ENCODE measurements at regions of chr12 and their contacts with region 1.

Region 1: DNA sequence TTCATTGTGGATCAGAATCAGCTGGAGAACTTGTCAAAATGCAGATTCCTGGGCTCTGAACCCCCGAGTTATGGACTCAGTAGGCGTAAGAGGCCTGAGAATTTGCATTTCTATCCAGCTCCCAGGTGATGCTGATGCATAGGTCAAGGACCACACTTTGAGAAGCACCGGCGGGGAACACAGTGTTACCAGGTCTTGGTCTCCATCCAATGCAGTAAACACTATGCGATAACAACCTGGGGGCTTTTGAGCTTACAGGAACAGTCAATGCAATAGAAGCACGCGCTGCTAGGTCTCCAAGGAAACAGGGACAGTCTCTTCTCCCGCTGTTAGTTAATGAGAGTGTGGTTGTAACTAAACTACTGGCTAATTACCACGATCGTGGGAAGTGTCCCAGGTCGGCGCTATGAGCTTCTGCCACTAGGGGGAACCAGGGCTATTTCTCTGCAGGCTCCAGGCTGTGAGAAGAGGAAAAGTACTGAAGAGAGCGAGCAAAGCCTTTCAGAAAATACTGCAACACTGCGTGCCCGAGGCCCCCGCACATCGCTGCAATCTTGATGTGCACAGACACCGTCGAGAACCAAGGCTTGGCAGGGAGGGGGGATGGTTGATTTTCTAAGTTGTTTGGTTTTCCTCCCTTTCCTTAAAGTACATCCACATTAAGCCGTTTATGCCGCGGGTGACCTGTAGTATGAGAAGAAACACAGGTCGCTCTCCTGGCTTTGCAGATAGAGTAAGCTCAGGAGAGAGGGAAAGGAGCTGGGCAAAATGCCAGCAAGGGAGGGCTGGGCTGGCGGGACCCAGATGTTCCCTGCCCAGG is 52.0 kb upstream of the KCNA1 start:
- DNase-seq: peak; percentile 5
- H3K4me3 ChIP-seq: peak overlapping the region; percentile 27
- CTCF ChIP-seq: peak; percentile 88

Region 2: GRCh38 chr12:4899364-4899763 is 41.7 kb after region 1 on chr12:
- CTCF ChIA-PET with region 1: interaction called, 28 read pairs
- POLR2A ChIA-PET with region 1: no interaction called
- DNase-seq: no peak
- H3K4me3 ChIP-seq: no peak overlapping the region
- CTCF ChIP-seq: peak; percentile 6

Region 3: DNA sequence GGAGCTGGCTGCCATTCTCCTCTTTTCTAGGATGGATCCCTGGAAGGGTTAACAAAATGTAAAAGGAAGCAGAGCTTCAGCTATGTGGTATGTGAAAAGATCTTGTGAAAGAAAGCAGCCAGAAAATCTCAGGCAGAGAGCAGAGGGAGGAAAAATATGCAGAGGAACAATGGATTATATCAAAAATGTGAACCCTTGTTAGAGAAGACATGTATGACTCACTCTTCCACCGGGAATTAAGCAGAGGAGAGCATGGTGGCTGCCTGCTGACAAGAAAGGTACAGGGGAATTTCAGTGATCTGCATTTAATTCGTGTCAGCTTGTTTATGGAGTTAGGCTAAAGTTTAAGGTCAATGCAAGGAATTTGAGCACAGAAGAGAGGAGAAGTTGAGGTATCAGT is 98.4 kb after region 1 on chr12:
- CTCF ChIA-PET with region 1: interaction called, 10 read pairs
- POLR2A ChIA-PET with region 1: no interaction called
- DNase-seq: no peak
- H3K4me3 ChIP-seq: no peak overlapping the region
- CTCF ChIP-seq: no peak

Region 4: GRCh38 chr12:4987076-4987760 is 129.5 kb after region 1 on chr12:
- CTCF ChIA-PET with region 1: interaction called, 20 read pairs
- POLR2A ChIA-PET with region 1: no interaction called
- DNase-seq: no peak
- H3K4me3 ChIP-seq: no peak overlapping the region
- CTCF ChIP-seq: no peak

Region 5: GRCh38 chr12:5013266-5013730 is 155.6 kb after region 1 on chr12:
- CTCF ChIA-PET with region 1: interaction called, 155 read pairs
- POLR2A ChIA-PET with region 1: no interaction called
- DNase-seq: no peak
- H3K4me3 ChIP-seq: no peak overlapping the region
- CTCF ChIP-seq: no peak

Region 6: DNA sequence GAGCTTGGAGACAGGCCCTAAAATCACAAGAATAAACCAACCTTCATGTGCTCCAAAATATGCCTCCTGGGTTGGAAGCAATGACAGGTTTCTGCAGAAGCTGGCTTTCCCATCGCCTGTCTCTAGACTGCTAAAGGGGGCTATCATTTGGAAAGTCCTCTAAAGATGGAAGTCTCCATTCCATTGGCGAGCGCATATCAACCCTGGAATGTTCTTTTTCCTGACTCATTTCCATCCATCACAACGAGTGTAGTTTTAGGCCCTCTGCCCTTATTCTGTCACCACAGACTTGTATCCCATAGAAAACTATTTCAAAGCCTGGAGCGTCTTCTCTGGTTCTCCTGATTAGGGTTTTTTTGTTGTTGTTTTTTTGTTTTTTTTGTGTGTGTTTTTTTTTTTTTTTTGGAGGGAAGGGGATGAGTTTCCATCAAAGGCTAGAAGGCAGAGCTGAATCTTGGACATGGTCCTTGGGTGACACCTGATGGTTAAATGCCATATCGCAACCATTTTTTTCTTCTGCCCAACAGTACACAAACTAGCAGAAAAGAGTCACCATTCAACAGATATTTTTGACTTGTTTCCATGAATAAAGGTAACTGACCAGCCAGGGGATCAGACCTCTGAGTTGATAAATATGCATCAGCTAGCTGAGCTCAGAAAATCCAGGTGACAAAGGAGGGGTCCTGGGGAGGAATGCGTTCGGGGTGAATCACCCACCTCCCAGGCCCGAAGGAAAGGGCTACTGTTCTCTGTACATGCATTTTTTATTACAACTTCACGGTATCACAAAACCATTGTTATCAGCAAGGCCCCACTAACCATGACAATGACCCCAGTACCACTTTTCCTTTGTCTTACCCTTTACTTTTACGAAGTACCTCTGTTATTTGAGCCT is 226.5 kb after region 1 on chr12:
- CTCF ChIA-PET with region 1: interaction called, 95 read pairs
- POLR2A ChIA-PET with region 1: no interaction called
- DNase-seq: no peak
- H3K4me3 ChIP-seq: no peak overlapping the region
- CTCF ChIP-seq: peak; percentile 57

Region 7: GRCh38 chr12:5230156-5230555 is 372.5 kb after region 1 on chr12:
- CTCF ChIA-PET with region 1: no interaction called
- POLR2A ChIA-PET with region 1: no interaction called
- DNase-seq: peak; percentile 59
- H3K4me3 ChIP-seq: no peak overlapping the region
- CTCF ChIP-seq: no peak

Region 8: GRCh38 chr12:5417500-5417899 is 559.8 kb after region 1 on chr12:
- CTCF ChIA-PET with region 1: no interaction called
- POLR2A ChIA-PET with region 1: no interaction called
- DNase-seq: peak; percentile 37
- H3K4me3 ChIP-seq: no peak overlapping the region
- CTCF ChIP-seq: no peak

Measured in AG04449 (cell line).